Activated B cell treated with CpG ODN at 0.5 μM for 24 hours (primary cell): ENCODE measurements at regions of chr2 and their contacts with region 1.

Region 1: GRCh38 chr2:64330281-64331113 is 123.5 kb upstream of the LGALSL start:
- DNase-seq: peak; percentile 41
- ATAC-seq: no peak
- H3K4me3 Mint-ChIP-seq: peak overlapping the region; percentile 55
- H3K27ac Mint-ChIP-seq: peak overlapping the region; percentile 10
- H3K4me1 Mint-ChIP-seq: peaks cover 47% of the 10 kb centered on the region
- H3K27me3 Mint-ChIP-seq: no peaks in the 10 kb centered on the region
- CTCF ChIP-seq: peak; percentile 45

Region 2: DNA sequence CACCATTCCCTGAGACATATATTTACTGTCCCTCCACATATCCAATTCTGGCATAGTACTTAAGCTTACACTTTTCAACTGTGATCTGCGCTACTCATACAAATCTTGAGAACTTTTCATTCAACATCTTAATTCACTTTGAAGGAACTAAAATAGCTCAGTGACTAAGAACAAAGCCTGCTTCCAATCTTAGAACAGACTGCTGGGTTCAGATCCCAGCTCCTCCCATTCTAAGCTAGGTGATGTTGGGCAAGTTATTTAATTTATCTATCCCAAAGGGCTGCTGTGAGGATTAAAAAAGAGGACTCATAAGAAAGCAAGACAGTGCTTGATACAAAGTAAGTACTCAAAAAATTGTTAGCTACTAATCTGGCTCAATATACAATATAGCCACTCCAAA is 430.9 kb before region 1 on chr2:
- CTCF ChIA-PET with region 1: no interaction called
- POLR2A ChIA-PET with region 1: no interaction called
- intact Hi-C with region 1: loop called (anchors 5 kb)
- DNase-seq: no peak
- ATAC-seq: no peak
- H3K4me3 Mint-ChIP-seq: no peak overlapping the region
- H3K27ac Mint-ChIP-seq: no peak overlapping the region
- H3K4me1 Mint-ChIP-seq: peaks cover 3% of the 10 kb centered on the region
- H3K27me3 Mint-ChIP-seq: no peaks in the 10 kb centered on the region
- CTCF ChIP-seq: no peak

Region 3: GRCh38 chr2:64092502-64092901 is 238.0 kb before region 1 on chr2:
- CTCF ChIA-PET with region 1: interaction called, 15 read pairs
- POLR2A ChIA-PET with region 1: interaction called, 29 read pairs
- intact Hi-C with region 1: loop called (anchors 1 kb)
- DNase-seq: no peak
- ATAC-seq: peak; percentile 31
- H3K4me3 Mint-ChIP-seq: peak overlapping the region; percentile 52
- H3K27ac Mint-ChIP-seq: peak overlapping the region; percentile 91
- H3K4me1 Mint-ChIP-seq: peaks cover 66% of the 10 kb centered on the region
- H3K27me3 Mint-ChIP-seq: no peaks in the 10 kb centered on the region
- CTCF ChIP-seq: no peak

Region 4: DNA sequence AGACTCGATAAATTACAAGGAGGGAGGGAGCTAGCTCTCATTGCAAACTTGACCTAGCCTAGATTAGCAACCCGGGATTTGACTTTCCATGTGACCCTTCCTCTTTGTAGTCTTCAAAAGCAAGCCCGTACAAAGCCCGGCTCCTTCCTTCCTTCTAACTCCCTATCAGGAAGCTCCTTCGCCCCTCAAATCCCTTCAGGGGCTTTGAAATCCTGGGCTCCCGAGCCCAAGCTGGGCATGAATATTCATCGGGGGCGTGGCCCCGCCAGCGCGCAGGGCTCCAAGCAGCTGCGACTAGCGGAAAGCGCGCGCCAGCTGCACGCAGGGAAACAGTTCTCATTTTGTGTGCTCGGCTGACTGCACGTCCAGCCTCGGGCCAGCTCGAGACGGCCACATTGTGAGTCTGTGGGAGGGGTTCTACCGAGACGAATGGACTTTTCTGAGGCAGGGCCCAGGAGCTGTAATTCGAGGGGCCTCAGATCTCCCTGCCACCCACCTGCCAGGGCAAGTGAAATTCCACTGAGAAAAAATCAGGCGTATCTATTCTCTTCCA is 102.3 kb before region 1 on chr2:
- CTCF ChIA-PET with region 1: interaction called, 6 read pairs
- POLR2A ChIA-PET with region 1: interaction called, 10 read pairs
- intact Hi-C with region 1: loop called (anchors 5 kb)
- DNase-seq: peak; percentile 67
- ATAC-seq: peak; percentile 96
- H3K4me3 Mint-ChIP-seq: peak overlapping the region; percentile 93
- H3K27ac Mint-ChIP-seq: peak overlapping the region; percentile 91
- H3K4me1 Mint-ChIP-seq: peaks cover 35% of the 10 kb centered on the region
- H3K27me3 Mint-ChIP-seq: no peaks in the 10 kb centered on the region
- CTCF ChIP-seq: no peak

Region 5: GRCh38 chr2:64488050-64488974 is 157.8 kb after region 1 on chr2:
- CTCF ChIA-PET with region 1: interaction called, 203 read pairs
- POLR2A ChIA-PET with region 1: interaction called, 4 read pairs
- intact Hi-C with region 1: loop called (anchors 1 kb)
- DNase-seq: peak; percentile 65
- ATAC-seq: peak; percentile 90
- H3K4me3 Mint-ChIP-seq: no peak overlapping the region
- H3K27ac Mint-ChIP-seq: no peak overlapping the region
- H3K4me1 Mint-ChIP-seq: peaks cover 4% of the 10 kb centered on the region
- H3K27me3 Mint-ChIP-seq: peaks cover 6% of the 10 kb centered on the region
- CTCF ChIP-seq: peak; percentile 56

Region 6: GRCh38 chr2:64626963-64627760 is 296.7 kb after region 1 on chr2:
- CTCF ChIA-PET with region 1: no interaction called
- POLR2A ChIA-PET with region 1: no interaction called
- intact Hi-C with region 1: no loop called
- DNase-seq: no peak
- ATAC-seq: no peak
- H3K4me3 Mint-ChIP-seq: no peak overlapping the region
- H3K27ac Mint-ChIP-seq: no peak overlapping the region
- H3K4me1 Mint-ChIP-seq: peaks cover 14% of the 10 kb centered on the region
- H3K27me3 Mint-ChIP-seq: no peaks in the 10 kb centered on the region
- CTCF ChIP-seq: no peak

Region 7: GRCh38 chr2:64873472-64873924 is 543.0 kb after region 1 on chr2:
- CTCF ChIA-PET with region 1: interaction called, 6 read pairs
- POLR2A ChIA-PET with region 1: no interaction called
- intact Hi-C with region 1: loop called (anchors 1 kb)
- DNase-seq: peak; percentile 86
- ATAC-seq: peak; percentile 99
- H3K4me3 Mint-ChIP-seq: peak overlapping the region; percentile 52
- H3K27ac Mint-ChIP-seq: no peak overlapping the region
- H3K4me1 Mint-ChIP-seq: peaks cover 8% of the 10 kb centered on the region
- H3K27me3 Mint-ChIP-seq: no peaks in the 10 kb centered on the region
- CTCF ChIP-seq: peak; percentile 90